Mammary epithelial cell (primary cell): ENCODE measurements at regions of chr20 and their contacts with region 1.

Region 1: DNA sequence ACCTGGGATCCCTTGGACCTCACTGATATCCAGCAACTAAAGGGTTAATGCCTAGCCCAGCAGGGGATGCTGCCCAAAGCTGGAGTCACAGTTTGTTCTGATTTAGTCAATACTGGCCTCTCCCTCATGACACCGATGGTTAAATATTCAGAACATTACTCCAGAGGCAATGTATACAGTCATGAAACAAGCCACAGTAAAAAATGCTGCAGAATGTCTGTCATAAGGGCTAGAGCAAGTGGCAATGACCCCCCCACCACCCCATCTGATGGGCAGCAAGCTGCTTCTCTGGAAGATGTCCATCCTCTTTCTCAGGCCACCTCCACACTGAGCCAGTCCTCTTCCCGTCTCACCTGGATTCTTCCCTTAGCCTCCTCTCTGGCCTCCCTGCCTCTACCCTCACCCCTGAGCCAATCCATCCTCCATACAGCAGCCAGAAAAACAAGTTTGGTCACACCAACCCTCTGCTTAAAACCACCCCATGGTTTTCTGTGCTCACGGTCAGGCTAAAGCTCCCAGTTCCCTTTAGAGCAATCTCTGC is 99.1 kb upstream of the KCNG1 start:
- DNase-seq: peak; percentile 62
- H3K4me3 ChIP-seq: no peak overlapping the region
- H3K27ac ChIP-seq: no peak overlapping the region
- H3K4me1 ChIP-seq: peaks cover 7% of the 10 kb centered on the region
- H3K27me3 ChIP-seq: no peaks in the 10 kb centered on the region
- CTCF ChIP-seq: no peak

Region 2: DNA sequence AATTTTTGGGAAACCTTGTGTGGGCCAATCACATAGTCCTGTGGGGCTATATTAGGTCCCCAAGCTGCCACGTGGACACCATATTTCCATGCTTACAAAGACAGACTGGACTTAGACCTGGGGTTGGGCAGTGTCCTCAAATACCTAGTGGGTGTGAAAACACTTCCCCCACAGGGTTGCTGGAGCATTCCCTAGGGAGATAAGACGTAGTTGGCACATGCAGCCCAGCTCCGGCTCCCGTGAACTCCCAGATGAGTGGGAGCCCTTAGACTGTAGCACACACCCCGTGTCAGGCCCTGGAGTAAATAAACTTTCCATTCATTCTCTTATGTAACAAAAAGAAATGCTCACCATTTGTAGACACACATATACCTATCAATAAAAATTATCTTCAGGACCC is 113.3 kb before region 1 on chr20:
- CTCF ChIA-PET with region 1: no interaction called
- dilution Hi-C with region 1: loop called (anchors 5 kb)
- in situ Hi-C with region 1: no loop called
- intact Hi-C with region 1: no loop called
- DNase-seq: no peak
- H3K4me3 ChIP-seq: no peak overlapping the region
- H3K27ac ChIP-seq: no peak overlapping the region
- H3K4me1 ChIP-seq: no peaks in the 10 kb centered on the region
- H3K27me3 ChIP-seq: no peaks in the 10 kb centered on the region
- CTCF ChIP-seq: no peak

Region 3: DNA sequence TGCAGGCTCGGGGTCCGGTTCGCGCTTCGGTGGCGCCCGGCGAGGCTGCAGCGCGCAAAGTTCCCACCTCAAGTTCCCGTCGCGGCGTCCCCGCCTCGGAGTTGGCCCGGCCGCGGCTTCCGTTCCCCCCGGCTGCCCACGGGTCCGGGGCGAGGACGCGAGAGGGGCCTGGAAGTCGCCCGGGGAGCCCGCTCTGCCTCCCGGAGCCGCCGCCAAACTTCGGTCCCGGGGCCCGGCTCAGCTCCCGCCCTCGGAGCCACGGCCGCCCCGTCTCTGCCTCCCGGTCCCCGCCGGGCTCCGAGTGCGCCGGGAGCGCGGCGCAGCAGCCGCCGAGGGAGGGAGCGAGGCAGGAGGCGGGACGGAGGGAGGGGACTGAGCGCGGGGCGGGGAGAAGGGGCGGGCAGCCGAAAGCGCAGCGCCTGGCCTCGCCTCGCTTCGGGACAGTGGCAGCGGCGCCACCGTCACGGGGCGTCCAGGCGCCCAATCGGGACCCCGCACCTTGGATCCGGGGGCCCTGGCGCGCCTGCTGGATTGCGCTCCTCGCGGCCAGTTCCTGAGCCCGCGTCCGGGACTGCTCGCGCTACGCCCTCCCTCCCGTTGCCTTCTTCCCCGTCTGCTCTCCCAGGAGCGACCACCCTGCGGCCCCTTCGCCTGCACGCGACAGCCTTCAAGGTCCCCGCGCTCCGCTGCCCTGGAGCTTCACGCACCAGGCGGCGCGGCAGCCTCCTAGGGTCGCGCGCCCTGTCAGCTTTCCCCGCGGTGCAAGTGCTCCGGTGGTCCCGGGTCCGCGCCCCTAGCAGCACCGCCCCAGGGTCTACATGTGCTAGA is 99.0 kb before region 1 on chr20 and contains the start of gene KCNG1:
- CTCF ChIA-PET with region 1: no interaction called
- dilution Hi-C with region 1: no loop called
- in situ Hi-C with region 1: no loop called
- intact Hi-C with region 1: loop called (anchors 5 kb)
- DNase-seq: peak; percentile 76
- H3K4me3 ChIP-seq: peak within 1 kb of the TSS; percentile 70 to 83 (median 73)
- H3K27ac ChIP-seq: peak within 1 kb of the TSS; percentile 28
- H3K4me1 ChIP-seq: peaks cover 37% of the 10 kb centered on the region
- H3K27me3 ChIP-seq: peaks cover 5% of the 10 kb centered on the region
- CTCF ChIP-seq: no peak
- total RNA-seq, gene KCNG1: 43.9 to 53.0 TPM

Region 4: GRCh38 chr20:51059862-51060261 is 62.1 kb before region 1 on chr20:
- CTCF ChIA-PET with region 1: no interaction called
- dilution Hi-C with region 1: loop called (anchors 5 kb)
- in situ Hi-C with region 1: no loop called
- intact Hi-C with region 1: no loop called
- DNase-seq: peak; percentile 7
- H3K4me3 ChIP-seq: no peak overlapping the region
- H3K27ac ChIP-seq: no peak overlapping the region
- H3K4me1 ChIP-seq: no peaks in the 10 kb centered on the region
- H3K27me3 ChIP-seq: peaks cover 1% of the 10 kb centered on the region
- CTCF ChIP-seq: no peak

Region 5: GRCh38 chr20:51091406-51092195 is 30.4 kb before region 1 on chr20:
- CTCF ChIA-PET with region 1: no interaction called
- dilution Hi-C with region 1: no loop called
- in situ Hi-C with region 1: no loop called
- intact Hi-C with region 1: no loop called
- DNase-seq: no peak
- H3K4me3 ChIP-seq: no peak overlapping the region
- H3K27ac ChIP-seq: no peak overlapping the region
- H3K4me1 ChIP-seq: no peaks in the 10 kb centered on the region
- H3K27me3 ChIP-seq: peaks cover 5% of the 10 kb centered on the region
- CTCF ChIP-seq: no peak

Region 6: GRCh38 chr20:51169813-51170212 is 47.8 kb after region 1 on chr20:
- CTCF ChIA-PET with region 1: no interaction called
- dilution Hi-C with region 1: loop called (anchors 5 kb)
- in situ Hi-C with region 1: no loop called
- intact Hi-C with region 1: no loop called
- DNase-seq: no peak
- H3K4me3 ChIP-seq: no peak overlapping the region
- H3K27ac ChIP-seq: no peak overlapping the region
- H3K4me1 ChIP-seq: no peaks in the 10 kb centered on the region
- H3K27me3 ChIP-seq: no peaks in the 10 kb centered on the region
- CTCF ChIP-seq: no peak